CD8-positive, alpha-beta T cell (primary cell): ENCODE measurements at regions of chr3 and their contacts with region 1.

Region 1: GRCh38 chr3:101665851-101666250 is 11.1 kb downstream of the ZBTB11 start:
- DNase-seq: no peak
- ATAC-seq: no peak
- H3K4me3 ChIP-seq: no peak overlapping the region
- H3K4me3 Mint-ChIP-seq: no peak overlapping the region
- H3K27ac ChIP-seq: no peak overlapping the region
- H3K27ac Mint-ChIP-seq: no peak overlapping the region
- H3K4me1 ChIP-seq: no peaks in the 10 kb centered on the region
- H3K4me1 Mint-ChIP-seq: peaks cover 6% of the 10 kb centered on the region
- H3K27me3 ChIP-seq: no peaks in the 10 kb centered on the region
- H3K27me3 Mint-ChIP-seq: no peaks in the 10 kb centered on the region
- CTCF ChIP-seq: no peak

Region 2: GRCh38 chr3:100386437-100387074 is 1279.3 kb before region 1 on chr3:
- CTCF ChIA-PET with region 1: no interaction called
- POLR2A ChIA-PET with region 1: no interaction called
- intact Hi-C with region 1: loop called in 1 of 2 experiments (anchors 10 kb)
- DNase-seq: no peak
- ATAC-seq: no peak
- H3K4me3 ChIP-seq: no peak overlapping the region
- H3K4me3 Mint-ChIP-seq: no peak overlapping the region
- H3K27ac ChIP-seq: no peak overlapping the region
- H3K27ac Mint-ChIP-seq: peak overlapping the region; percentile 17
- H3K4me1 ChIP-seq: peaks cover 5% of the 10 kb centered on the region
- H3K4me1 Mint-ChIP-seq: peaks cover 18% of the 10 kb centered on the region
- H3K27me3 ChIP-seq: no peaks in the 10 kb centered on the region
- H3K27me3 Mint-ChIP-seq: no peaks in the 10 kb centered on the region
- CTCF ChIP-seq: no peak